Mammary epithelial cell (primary cell): ENCODE measurements at regions of chr1 and their contacts with region 1.

Region 1: DNA sequence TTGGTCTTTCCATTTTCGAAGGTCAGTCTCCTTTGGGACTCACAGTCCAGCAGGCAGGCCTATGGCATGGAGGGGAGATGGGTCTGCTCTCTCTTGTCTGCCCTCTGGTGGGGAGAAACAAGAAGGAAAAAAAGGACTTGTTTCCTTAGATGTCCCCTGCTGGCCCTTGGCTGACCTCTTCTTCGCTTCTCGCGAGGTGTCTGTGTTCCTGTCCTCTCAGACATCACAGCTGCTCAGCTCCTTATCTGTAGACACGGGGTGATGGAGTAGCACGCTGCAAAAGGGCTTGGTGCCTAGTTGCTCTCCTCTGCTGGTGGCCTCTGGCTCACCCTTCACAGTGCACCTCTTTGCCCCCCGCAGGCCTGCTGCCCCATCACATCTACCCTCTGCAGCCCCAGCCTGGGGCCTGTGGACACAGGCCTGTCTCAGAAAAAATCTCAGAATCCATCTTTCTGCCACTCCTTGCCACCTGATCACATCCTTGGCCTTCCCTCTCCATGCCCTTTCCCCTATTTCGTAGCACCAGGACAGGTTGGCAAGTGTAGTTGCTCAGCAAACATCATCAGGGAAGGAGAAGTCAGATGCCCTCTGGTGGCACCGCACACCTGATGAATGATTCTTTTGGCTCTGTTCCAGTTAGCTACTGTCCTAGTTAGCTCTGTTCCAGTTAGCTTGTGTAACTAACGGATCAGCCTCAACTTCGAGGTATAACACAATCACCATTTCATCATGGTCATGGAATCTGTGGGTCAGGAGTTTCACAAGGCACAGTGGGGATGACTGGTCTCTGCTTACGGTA is 18.7 kb upstream of the AK2 start:
- DNase-seq: peak; percentile 64
- H3K4me3 ChIP-seq: no peak overlapping the region
- H3K27ac ChIP-seq: no peak overlapping the region
- H3K4me1 ChIP-seq: peaks cover 13% of the 10 kb centered on the region
- H3K27me3 ChIP-seq: no peaks in the 10 kb centered on the region
- CTCF ChIP-seq: peak; percentile 50 to 66

Region 2: GRCh38 chr1:32933742-32934322 is 121.6 kb before region 1 on chr1:
- CTCF ChIA-PET with region 1: interaction called, 4 read pairs
- dilution Hi-C with region 1: no loop called
- in situ Hi-C with region 1: no loop called
- intact Hi-C with region 1: loop called (anchors 1 kb)
- DNase-seq: peak; percentile 80
- H3K4me3 ChIP-seq: no peak overlapping the region
- H3K27ac ChIP-seq: peak overlapping the region; percentile 41
- H3K4me1 ChIP-seq: peaks cover 20% of the 10 kb centered on the region
- H3K27me3 ChIP-seq: no peaks in the 10 kb centered on the region
- CTCF ChIP-seq: no peak

Region 3: DNA sequence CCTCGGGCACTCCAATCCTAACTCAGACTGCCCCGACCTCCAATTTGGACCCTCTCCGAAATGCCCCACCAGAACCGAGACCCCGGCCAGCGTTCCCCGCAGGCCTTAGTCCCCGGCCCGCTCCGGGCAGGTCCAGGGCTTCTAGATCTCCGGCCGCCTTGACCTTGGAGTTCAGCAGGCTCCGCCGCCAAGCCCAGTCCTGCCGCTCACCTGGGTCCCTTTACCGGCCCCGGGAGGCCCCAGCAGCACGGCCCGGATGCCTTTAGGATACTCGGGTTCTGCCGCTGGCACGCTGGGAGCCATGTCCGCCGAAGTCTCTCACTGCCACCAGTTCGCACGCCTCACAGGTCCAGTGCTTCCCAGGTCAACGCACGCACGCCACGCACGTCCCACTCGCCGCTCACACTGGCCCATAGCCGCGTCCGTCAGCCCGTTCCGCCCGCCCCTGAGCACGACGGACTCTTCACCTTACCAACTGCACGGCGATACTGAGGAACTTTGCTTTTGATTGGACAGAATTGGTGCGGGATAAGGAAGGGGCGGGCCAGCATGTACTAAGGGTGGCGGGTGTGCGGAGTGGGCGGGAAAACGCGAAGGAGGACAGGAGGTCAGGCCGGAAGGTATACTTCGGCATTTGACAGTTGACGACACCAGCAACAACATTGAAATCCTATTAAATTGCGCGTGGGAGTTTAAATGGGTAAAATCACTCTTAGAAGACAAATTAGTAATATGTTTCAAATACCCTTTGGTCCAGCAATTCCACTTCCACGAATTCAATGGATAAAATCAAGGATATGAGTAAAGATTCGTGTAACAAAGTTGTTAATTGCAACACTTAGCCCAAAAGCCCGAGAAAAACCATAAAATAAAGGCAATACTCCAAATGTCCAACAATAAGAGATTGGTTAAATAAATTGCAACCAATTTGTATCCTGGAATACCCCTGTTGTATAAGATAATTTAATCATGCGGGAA is 18.6 kb before region 1 on chr1 and contains the start of gene AK2:
- CTCF ChIA-PET with region 1: no interaction called
- dilution Hi-C with region 1: no loop called
- in situ Hi-C with region 1: no loop called
- intact Hi-C with region 1: loop called (anchors 1 kb)
- DNase-seq: peak; percentile 98
- H3K4me3 ChIP-seq: peak within 1 kb of the TSS; percentile 72 to 96 (median 78)
- H3K27ac ChIP-seq: peak within 1 kb of the TSS; percentile 92
- H3K4me1 ChIP-seq: peaks cover 12% of the 10 kb centered on the region
- H3K27me3 ChIP-seq: no peaks in the 10 kb centered on the region
- CTCF ChIP-seq: no peak
- total RNA-seq, gene AK2: 157 to 217 TPM

Region 4: DNA sequence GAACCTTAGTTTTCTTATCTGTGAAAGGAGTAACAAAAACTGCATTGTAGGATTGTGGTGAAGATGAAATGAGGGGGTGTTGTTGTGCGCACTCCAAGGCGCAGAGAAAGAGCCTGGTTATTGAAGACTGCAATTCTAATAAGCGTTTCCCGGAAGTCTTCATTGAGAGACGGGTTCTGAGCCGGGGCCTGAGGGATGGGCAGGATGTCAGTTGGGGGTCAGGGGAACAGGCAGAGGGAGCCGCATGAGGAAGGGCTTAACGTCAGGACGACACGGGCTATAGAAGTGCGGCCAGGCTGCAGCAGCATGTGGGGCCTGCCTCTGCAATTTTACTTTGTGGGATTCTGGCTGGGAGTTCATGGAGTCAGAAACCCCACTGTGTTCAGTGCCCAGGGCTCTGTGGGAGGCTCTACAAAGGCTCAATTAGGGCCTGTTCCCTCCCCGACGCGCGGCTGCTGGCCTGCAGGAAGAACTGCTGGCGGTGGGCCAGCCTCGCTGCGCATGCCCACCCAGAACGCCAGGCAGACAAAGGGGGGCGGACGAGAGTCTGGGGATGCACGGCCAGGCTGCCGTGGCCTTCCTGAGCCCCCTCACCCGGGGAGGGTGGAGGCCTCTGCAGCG is 105.8 kb after region 1 on chr1:
- CTCF ChIA-PET with region 1: no interaction called
- dilution Hi-C with region 1: no loop called
- in situ Hi-C with region 1: no loop called
- intact Hi-C with region 1: no loop called
- DNase-seq: no peak
- H3K4me3 ChIP-seq: no peak overlapping the region
- H3K27ac ChIP-seq: no peak overlapping the region
- H3K4me1 ChIP-seq: no peaks in the 10 kb centered on the region
- H3K27me3 ChIP-seq: no peaks in the 10 kb centered on the region
- CTCF ChIP-seq: no peak

Region 5: DNA sequence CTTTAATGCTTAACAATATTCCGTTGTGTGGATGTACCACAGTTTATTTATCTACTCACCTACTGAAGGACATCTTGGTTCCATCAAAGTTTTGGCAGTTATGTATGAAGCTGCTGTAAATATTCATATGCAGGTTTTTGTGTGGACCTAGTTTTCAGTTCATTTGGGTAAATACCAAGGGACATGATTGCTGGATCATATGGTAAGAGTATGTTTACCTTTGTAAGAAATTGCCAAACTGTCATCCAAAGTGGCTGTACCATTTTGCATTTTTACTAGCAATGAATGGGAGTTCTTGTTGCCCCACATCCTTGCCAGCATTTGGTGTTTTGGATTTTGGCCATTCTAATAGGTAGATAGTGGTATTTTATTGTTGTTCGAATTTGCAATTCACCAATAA is 427.0 kb after region 1 on chr1:
- CTCF ChIA-PET with region 1: no interaction called
- dilution Hi-C with region 1: no loop called
- in situ Hi-C with region 1: no loop called
- intact Hi-C with region 1: no loop called
- DNase-seq: no peak
- H3K4me3 ChIP-seq: no peak overlapping the region
- H3K27ac ChIP-seq: no peak overlapping the region
- H3K4me1 ChIP-seq: no peaks in the 10 kb centered on the region
- H3K27me3 ChIP-seq: no peaks in the 10 kb centered on the region
- CTCF ChIP-seq: no peak